ENCODE measurements at regions of chr13 and their contacts with region 1.

Region 1: GRCh38 chr13:19863323-19864023 is at the start of gene ZMYM5:
- DNase-seq: peak; percentile 83 to 98
- ATAC-seq: peak; percentile 86 to 93
- H3K4me3 ChIP-seq: peak within 1 kb of the TSS; percentile 88
- H3K27ac ChIP-seq: peak within 1 kb of the TSS; percentile 98 to 99
- H3K4me1 ChIP-seq: peaks cover 23% of the 10 kb centered on the region
- CTCF ChIP-seq: no peak
- EP300 ChIP-seq: no peak
- POLR2A ChIP-seq: peak; percentile 64
- RAD21 ChIP-seq: no peak
- polyA plus RNA-seq, gene ZMYM5: 10.0 and 14.3 TPM in 2 replicates

Region 2: DNA sequence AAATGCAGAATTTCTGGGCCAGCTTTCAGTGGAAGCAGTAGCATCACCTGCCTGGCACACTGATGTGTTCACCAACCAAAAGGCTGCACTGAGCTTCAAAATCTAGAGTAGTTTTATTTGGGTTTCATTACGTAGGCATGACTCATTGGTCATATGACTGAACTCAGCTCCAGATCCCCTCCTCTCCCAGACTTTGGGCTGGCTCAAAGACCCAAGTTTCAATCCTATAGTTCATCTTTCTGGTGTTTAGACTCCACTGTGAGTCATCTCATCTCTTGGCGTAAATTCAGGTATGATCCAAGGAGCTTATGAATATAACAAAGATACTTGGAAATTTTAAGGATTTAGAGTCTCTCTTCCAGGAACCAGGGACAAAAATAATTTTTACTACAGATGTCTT is 17.7 kb before region 1 on chr13:
- CTCF ChIA-PET with region 1: interaction called, 8 read pairs
- POLR2A ChIA-PET with region 1: interaction called, 30 read pairs
- DNase-seq: peak; percentile 76 to 78
- ATAC-seq: peak; percentile 93 to 97
- H3K4me3 ChIP-seq: no peak overlapping the region
- H3K27ac ChIP-seq: peak overlapping the region; percentile 49 to 58; a peak in 5 of 6 replicates
- H3K4me1 ChIP-seq: peaks cover 18% of the 10 kb centered on the region
- CTCF ChIP-seq: no peak
- EP300 ChIP-seq: no peak
- POLR2A ChIP-seq: no peak
- RAD21 ChIP-seq: no peak

Region 3: GRCh38 chr13:19882231-19882630 is 18.8 kb after region 1 on chr13:
- CTCF ChIA-PET with region 1: interaction called, 8 read pairs
- POLR2A ChIA-PET with region 1: interaction called, 12 read pairs
- DNase-seq: no peak
- ATAC-seq: no peak
- H3K4me3 ChIP-seq: no peak overlapping the region
- H3K27ac ChIP-seq: no peak overlapping the region
- H3K4me1 ChIP-seq: peaks cover 3% of the 10 kb centered on the region; the same call in 1 of the 3 replicates
- CTCF ChIP-seq: no peak
- EP300 ChIP-seq: no peak
- POLR2A ChIP-seq: no peak
- RAD21 ChIP-seq: no peak

Measured in A549 (cell line).